ENCODE measurements at regions of chrX and their contacts with region 1.

Region 1: GRCh38 chrX:120036704-120037103 is 40.8 kb downstream of the RHOXF2B start:
- DNase-seq: no peak
- ATAC-seq: no peak
- H3K4me3 ChIP-seq: no peak overlapping the region
- H3K27ac ChIP-seq: no peak overlapping the region
- H3K4me1 ChIP-seq: no peaks in the 10 kb centered on the region
- H3K27me3 ChIP-seq: no peaks in the 10 kb centered on the region
- CTCF ChIP-seq: no peak
- POLR2A ChIP-seq: no peak
- RAD21 ChIP-seq: no peak

Region 2: DNA sequence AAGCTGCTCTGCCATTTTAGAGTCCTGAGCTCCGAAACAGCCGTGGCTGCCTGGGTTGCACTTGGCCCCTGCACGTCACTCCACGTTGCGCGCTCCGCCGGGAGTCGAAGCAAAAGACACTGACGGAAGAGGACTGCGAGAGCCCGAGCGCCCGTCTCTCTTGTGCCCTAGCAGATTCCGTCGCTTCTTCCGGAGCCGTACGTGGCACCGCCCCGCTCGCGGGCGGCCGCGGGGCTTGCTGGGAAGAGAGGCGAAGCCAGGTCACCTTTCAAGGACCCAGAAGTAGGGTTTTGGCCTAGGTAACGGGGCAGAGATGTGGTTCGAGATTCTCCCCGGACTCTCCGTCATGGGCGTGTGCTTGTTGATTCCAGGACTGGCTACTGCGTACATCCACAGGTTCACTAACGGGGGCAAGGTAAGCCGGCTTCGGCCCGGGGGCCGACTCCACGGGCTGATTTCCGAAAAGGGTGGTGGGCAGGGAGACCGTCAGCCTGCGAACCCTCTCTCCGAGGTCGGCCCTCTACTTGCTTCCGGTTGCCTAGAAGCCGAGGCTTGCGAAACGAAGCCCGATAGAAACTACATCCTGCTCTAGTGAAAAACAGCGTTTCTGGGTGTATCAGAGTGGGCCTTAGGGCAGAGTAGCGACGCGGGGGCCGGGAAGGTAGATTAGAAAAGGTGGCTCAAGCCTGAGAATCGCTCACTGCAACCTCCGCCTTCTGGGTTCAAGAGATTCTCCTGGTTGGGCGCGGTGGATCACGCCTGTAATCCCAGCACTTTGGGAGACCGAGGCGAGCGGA is 164.9 kb before region 1 on chrX and contains the starts of genes NDUFA1 and RNF113A:
- CTCF ChIA-PET with region 1: no interaction called
- POLR2A ChIA-PET with region 1: no interaction called
- dilution Hi-C with region 1: no loop called
- in situ Hi-C with region 1: no loop called
- intact Hi-C with region 1: no loop called
- DNase-seq: peak; percentile 81
- ATAC-seq: peak; percentile 93
- H3K4me3 ChIP-seq: peak within 1 kb of the TSS; percentile 89
- H3K27ac ChIP-seq: peak within 1 kb of the TSS; percentile 88
- H3K4me1 ChIP-seq: no peaks in the 10 kb centered on the region
- H3K27me3 ChIP-seq: no peaks in the 10 kb centered on the region
- CTCF ChIP-seq: no peak
- POLR2A ChIP-seq: peak; percentile 79; the same call in 1 of the 2 replicates
- RAD21 ChIP-seq: no peak
- total RNA-seq, gene NDUFA1: 12.5 and 47.5 TPM in 2 replicates
- total RNA-seq, gene RNF113A: 16.5 and 20.6 TPM in 2 replicates

Region 3: GRCh38 chrX:120090208-120090607 is 53.5 kb after region 1 on chrX:
- CTCF ChIA-PET with region 1: no interaction called
- POLR2A ChIA-PET with region 1: no interaction called
- dilution Hi-C with region 1: no loop called
- in situ Hi-C with region 1: loop called (anchors 10 kb)
- intact Hi-C with region 1: no loop called
- DNase-seq: no peak
- ATAC-seq: no peak
- H3K4me3 ChIP-seq: no peak overlapping the region
- H3K27ac ChIP-seq: no peak overlapping the region
- H3K4me1 ChIP-seq: no peaks in the 10 kb centered on the region
- H3K27me3 ChIP-seq: peaks cover 2% of the 10 kb centered on the region
- CTCF ChIP-seq: no peak
- POLR2A ChIP-seq: no peak
- RAD21 ChIP-seq: no peak